ENCODE measurements at regions of chr1 and their contacts with region 1.

Region 1: GRCh38 chr1:51616901-51617708 is at the start of gene OSBPL9:
- DNase-seq: peak; percentile 99
- H3K4me3 ChIP-seq: peak within 1 kb of the TSS; percentile 78 to 83 (median 82)
- H3K27ac ChIP-seq: peak within 1 kb of the TSS; percentile 89 to 94 (median 90)
- H3K4me1 ChIP-seq: peaks cover 41 to 77% (median 72%) of the 10 kb centered on the region in 4 donors
- H3K27me3 ChIP-seq: no peaks in the 10 kb centered on the region
- CTCF ChIP-seq: no peak
- EP300 ChIP-seq: no peak
- POLR2A ChIP-seq: peak; percentile 50
- total RNA-seq, gene OSBPL9: 66.8 to 84.5 (median 75.9) TPM

Region 2: DNA sequence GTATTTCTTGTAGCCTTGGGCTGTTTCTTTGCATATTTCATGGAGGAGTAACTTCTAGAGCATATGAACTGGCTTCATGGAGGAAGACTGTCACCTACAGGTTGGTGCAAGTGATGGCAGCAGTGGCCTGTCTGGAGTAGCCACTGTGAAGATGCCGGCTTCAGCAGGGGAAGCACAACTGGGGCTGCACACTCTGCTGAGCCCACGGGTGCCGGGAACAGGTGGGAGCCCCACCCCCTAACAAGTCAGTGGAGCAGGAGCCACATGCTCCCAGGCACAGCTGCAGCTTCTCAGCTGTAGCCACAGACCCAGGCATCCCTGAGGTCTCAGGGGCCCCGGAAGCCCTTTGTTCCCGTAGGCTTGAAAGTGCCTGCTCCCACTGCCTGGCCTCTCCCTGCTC is 558.2 kb before region 1 on chr1:
- intact Hi-C with region 1: no loop called
- DNase-seq: no peak
- H3K4me3 ChIP-seq: no peak overlapping the region
- H3K27ac ChIP-seq: no peak overlapping the region
- H3K4me1 ChIP-seq: no peaks in the 10 kb centered on the region
- H3K27me3 ChIP-seq: no peaks in the 10 kb centered on the region
- CTCF ChIP-seq: peak in 2 of 3 experiments; percentile 16 to 29
- EP300 ChIP-seq: no peak
- POLR2A ChIP-seq: no peak

Region 3: GRCh38 chr1:51519048-51519864 is 97.8 kb before region 1 on chr1 and contains the start of gene EPS15:
- intact Hi-C with region 1: loop called (anchors 5 kb)
- DNase-seq: peak; percentile 96
- H3K4me3 ChIP-seq: peak within 1 kb of the TSS; percentile 93 to 99 (median 94)
- H3K27ac ChIP-seq: peak within 1 kb of the TSS; percentile 89 to 93 (median 91)
- H3K4me1 ChIP-seq: peaks cover 21 to 38% (median 36%) of the 10 kb centered on the region in 4 donors
- H3K27me3 ChIP-seq: no peaks in the 10 kb centered on the region
- CTCF ChIP-seq: no peak
- EP300 ChIP-seq: no peak
- POLR2A ChIP-seq: peak; percentile 8
- total RNA-seq, gene EPS15: 49.8 to 84.3 (median 62.5) TPM

Region 4: DNA sequence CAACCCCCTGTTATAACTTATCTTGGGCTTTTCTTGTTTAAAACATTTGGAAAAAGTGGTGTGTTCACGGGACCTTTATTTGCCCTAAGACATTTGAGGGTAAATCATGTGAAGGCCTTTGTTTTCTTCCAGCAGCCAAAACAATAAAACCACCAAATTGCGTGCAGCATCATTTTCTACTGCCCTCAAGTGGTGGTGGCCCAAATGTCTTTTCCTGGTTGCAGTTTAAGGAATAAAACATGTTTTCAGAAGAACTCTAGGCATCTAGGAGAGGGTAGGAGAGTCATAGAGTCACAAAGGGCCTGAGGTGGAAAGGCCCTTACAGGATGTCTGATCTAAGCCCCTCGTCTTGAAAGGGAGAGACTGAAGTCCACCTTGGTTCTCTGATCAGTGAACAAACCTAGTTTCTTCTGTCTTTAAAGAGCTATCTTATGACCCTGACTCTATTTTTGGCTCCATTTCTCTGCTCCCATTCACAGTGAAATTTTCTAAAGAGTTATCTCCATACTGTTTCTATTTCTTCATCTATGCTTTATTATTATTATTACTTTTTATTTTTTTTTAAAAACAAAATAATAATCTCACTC is 82.0 kb before region 1 on chr1:
- intact Hi-C with region 1: no loop called
- DNase-seq: no peak
- H3K4me3 ChIP-seq: no peak overlapping the region
- H3K27ac ChIP-seq: no peak overlapping the region
- H3K4me1 ChIP-seq: peaks cover 6 to 8% (median 7%) of the 10 kb centered on the region in 4 donors
- H3K27me3 ChIP-seq: no peaks in the 10 kb centered on the region
- CTCF ChIP-seq: peak; percentile 61 to 75 (median 67)
- EP300 ChIP-seq: no peak
- POLR2A ChIP-seq: no peak

Region 5: GRCh38 chr1:51690285-51690961 is 73.3 kb after region 1 on chr1:
- intact Hi-C with region 1: no loop called
- DNase-seq: no peak
- H3K4me3 ChIP-seq: no peak overlapping the region
- H3K27ac ChIP-seq: no peak overlapping the region
- H3K4me1 ChIP-seq: peaks cover 25 to 55% (median 47%) of the 10 kb centered on the region in 4 donors
- H3K27me3 ChIP-seq: no peaks in the 10 kb centered on the region
- CTCF ChIP-seq: no peak
- EP300 ChIP-seq: no peak
- POLR2A ChIP-seq: no peak

Measured in esophagus muscularis mucosa (tissue), 4 donors.